SK-N-SH (cell line): ENCODE measurements at regions of chr21 and their contacts with region 1.

Region 1: DNA sequence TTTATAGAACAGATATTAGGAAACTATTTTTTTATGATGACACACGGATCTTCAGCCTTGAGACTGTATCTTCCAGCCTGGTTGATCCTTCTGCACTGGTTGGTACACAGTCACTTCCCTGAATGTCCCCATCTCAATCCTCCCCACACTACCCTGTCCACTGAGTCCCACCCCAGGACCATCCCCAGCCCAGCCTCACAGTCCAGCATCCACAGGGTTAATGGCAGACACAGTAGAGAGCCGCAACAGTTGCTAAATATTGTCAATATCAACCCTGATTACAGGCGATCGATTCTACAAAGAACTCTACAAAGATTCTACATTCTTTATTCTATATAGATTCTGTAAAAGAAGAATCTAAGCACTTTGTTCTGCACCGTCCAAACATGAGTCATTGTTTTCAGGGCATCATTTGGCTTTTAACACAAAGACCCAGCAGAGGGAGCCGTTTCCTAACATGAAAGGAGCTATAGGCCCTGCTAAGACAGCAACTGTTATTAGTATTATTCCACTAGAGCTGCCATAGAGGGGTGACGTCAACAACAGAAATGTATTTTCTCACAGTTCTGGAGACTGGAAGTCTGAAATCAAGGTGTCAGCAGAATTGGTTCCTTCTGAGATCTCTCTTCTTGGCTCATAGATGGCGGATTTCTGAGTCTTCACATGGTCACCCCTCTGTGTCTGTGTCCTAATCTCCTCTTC is 30.1 kb upstream of the IFNAR2 start:
- DNase-seq: peak; percentile 68
- H3K4me3 ChIP-seq: no peak overlapping the region; a peak in 1 of 4 replicates
- H3K27ac ChIP-seq: no peak overlapping the region
- H3K4me1 ChIP-seq: peaks cover 2 to 5% of the 10 kb centered on the region in 2 experiments; a peak in 3 of 4 replicates
- H3K27me3 ChIP-seq: peaks cover 10% of the 10 kb centered on the region; the same call in 1 of the 2 replicates
- CTCF ChIP-seq: peak; percentile 91
- EP300 ChIP-seq: no peak
- RAD21 ChIP-seq: peak; percentile 97

Region 2: DNA sequence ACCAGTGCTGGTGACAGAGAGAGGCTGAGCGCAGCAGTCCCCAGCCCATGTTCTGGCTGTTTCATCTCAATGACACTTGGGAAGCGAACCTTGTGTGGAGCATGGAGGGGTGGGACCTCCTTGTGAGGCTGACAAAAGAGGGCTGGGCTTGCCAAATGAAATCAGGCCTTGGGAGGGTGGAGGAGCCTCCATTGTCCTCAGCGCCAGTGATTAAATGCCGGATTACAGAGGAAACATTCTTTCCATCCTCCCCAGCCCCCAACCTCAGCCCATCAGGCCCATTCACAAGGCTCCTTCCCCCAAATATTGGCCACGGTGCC is 364.8 kb before region 1 on chr21:
- CTCF ChIA-PET with region 1: interaction called, 23 read pairs
- POLR2A ChIA-PET with region 1: no interaction called
- DNase-seq: no peak
- H3K4me3 ChIP-seq: no peak overlapping the region
- H3K27ac ChIP-seq: no peak overlapping the region
- H3K4me1 ChIP-seq: no peaks in the 10 kb centered on the region
- H3K27me3 ChIP-seq: peaks cover 23% of the 10 kb centered on the region
- CTCF ChIP-seq: no peak
- EP300 ChIP-seq: no peak
- RAD21 ChIP-seq: no peak

Region 3: DNA sequence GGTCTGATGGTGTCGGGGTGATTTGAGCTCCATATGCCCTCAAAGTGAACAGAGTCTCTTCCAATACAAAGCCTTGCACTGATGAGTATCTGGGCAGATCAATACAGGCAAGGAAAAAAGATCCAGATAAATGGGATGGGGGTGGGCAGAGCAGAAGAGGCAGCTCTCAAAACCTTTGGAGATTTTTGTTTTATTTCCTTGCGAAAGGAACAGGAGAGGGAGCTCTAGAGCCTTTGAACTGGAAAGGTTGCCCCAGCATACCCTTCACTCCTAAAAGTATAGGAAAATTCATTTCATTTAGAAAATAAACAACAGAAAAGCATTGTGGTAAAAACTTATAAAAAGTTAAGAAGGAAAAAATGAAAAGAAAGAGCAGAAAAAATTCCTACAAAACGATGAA is 205.4 kb before region 1 on chr21:
- CTCF ChIA-PET with region 1: interaction called, 29 read pairs
- POLR2A ChIA-PET with region 1: no interaction called
- DNase-seq: peak; percentile 24
- H3K4me3 ChIP-seq: peak overlapping the region in 1 of 2 experiments; percentile 35; a peak in 1 of 4 replicates
- H3K27ac ChIP-seq: no peak overlapping the region
- H3K4me1 ChIP-seq: no peaks in the 10 kb centered on the region
- H3K27me3 ChIP-seq: peaks cover 59% of the 10 kb centered on the region
- CTCF ChIP-seq: peak; percentile 67
- EP300 ChIP-seq: no peak
- RAD21 ChIP-seq: peak; percentile 51

Region 4: DNA sequence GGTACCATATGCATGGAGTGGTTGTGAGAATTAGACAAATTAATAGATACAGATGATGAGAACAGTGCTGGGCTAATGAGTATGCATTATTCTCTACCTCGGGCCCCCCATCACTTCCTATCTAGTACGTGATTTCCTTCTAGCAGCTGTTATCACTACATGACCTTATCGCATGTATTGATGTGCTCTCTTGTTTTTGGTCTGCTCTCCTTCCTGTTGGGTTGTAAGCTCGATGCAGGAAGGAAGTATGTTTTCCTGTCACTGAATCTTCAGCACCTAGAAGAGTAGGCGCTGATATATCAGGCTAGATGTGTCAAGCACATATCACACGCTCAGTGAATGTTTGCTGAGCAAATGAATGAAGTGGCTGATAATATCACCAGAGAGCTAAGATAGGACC is 13.8 kb before region 1 on chr21:
- CTCF ChIA-PET with region 1: interaction called, 25 read pairs
- POLR2A ChIA-PET with region 1: no interaction called
- DNase-seq: no peak
- H3K4me3 ChIP-seq: no peak overlapping the region
- H3K27ac ChIP-seq: no peak overlapping the region
- H3K4me1 ChIP-seq: no peaks in the 10 kb centered on the region
- H3K27me3 ChIP-seq: peaks cover 34% of the 10 kb centered on the region; the same call in 1 of the 2 replicates
- CTCF ChIP-seq: no peak
- EP300 ChIP-seq: no peak
- RAD21 ChIP-seq: no peak

Region 5: DNA sequence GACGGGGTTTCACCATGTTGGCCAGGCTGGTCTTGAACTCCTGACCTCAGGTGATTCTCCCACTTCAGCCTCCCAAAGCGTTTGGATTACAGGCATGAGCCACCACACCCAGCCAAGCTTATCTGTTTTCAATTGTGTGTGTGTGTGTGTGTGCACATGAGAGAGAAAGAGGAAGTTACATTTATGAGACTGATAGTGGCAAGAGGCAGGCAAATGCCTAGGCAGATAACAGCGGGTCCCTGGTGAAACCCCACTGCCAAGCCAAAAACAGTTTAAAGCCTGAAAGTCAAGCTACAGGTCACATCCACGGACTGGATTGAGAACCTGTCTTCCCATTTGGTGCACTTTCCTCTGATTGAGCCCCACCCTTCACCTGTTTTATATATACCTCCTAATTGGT is 168.5 kb after region 1 on chr21:
- CTCF ChIA-PET with region 1: interaction called, 16 read pairs
- POLR2A ChIA-PET with region 1: no interaction called
- DNase-seq: no peak
- H3K4me3 ChIP-seq: no peak overlapping the region
- H3K27ac ChIP-seq: no peak overlapping the region
- H3K4me1 ChIP-seq: no peaks in the 10 kb centered on the region
- H3K27me3 ChIP-seq: no peaks in the 10 kb centered on the region
- CTCF ChIP-seq: no peak
- EP300 ChIP-seq: no peak
- RAD21 ChIP-seq: no peak

Region 6: GRCh38 chr21:33444499-33444898 is 244.8 kb after region 1 on chr21:
- CTCF ChIA-PET with region 1: interaction called, 32 read pairs
- POLR2A ChIA-PET with region 1: interaction called, 4 read pairs
- DNase-seq: no peak
- H3K4me3 ChIP-seq: no peak overlapping the region
- H3K27ac ChIP-seq: no peak overlapping the region
- H3K4me1 ChIP-seq: no peaks in the 10 kb centered on the region; a peak in 1 of 4 replicates
- H3K27me3 ChIP-seq: no peaks in the 10 kb centered on the region
- CTCF ChIP-seq: no peak
- EP300 ChIP-seq: no peak
- RAD21 ChIP-seq: no peak